ENCODE measurements at regions of chr2 and their contacts with region 1.

Region 1: DNA sequence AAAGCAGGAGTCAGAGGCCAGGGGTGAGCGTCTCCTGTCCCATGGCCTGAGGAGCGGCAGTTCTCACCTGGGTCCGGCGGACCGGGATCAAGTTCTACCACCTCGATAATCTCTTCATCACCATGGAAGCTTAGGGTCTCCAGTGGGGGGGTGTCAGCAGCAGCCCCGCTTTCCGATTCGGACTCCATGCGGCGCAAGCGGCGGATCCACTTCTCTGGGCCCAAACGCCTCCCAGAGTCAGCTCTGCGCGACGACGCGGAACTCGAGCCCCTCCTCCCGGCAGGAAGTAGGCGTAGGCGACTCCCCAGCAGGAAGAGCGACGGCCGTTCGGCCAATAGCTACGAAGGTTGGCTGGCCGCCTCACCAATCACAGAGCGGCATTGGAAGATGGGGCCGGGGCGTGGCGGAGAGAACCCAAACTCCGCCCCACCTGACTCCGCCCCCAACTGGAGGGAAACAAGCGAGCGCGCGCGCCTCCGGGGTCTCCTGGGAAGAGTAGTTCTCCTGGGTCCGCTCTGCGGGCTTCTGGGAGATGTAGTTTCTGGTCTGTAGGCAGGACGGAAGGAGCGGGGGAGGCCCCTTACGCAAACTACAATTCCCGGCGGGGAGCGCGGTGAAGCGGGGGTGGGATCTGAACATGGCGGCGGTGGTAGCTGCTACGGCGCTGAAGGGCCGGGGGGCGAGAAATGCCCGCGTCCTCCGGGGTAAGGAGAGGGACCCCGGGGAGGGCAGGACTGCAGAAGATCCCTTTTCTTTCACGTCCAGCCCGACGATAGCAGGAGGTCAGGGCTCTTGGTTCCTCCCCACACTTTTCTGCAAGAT is at the starts of genes AAMP and PNKD:
- DNase-seq: peak; percentile 100
- H3K4me3 Mint-ChIP-seq: peak within 1 kb of the TSS; percentile 88
- H3K27ac Mint-ChIP-seq: peak within 1 kb of the TSS; percentile 92
- H3K4me1 Mint-ChIP-seq: peaks cover 47% of the 10 kb centered on the region
- H3K27me3 Mint-ChIP-seq: no peaks in the 10 kb centered on the region
- total RNA-seq, gene AAMP: 42.3 to 51.1 TPM
- total RNA-seq, gene PNKD: 34.0 to 39.1 TPM

Region 2: DNA sequence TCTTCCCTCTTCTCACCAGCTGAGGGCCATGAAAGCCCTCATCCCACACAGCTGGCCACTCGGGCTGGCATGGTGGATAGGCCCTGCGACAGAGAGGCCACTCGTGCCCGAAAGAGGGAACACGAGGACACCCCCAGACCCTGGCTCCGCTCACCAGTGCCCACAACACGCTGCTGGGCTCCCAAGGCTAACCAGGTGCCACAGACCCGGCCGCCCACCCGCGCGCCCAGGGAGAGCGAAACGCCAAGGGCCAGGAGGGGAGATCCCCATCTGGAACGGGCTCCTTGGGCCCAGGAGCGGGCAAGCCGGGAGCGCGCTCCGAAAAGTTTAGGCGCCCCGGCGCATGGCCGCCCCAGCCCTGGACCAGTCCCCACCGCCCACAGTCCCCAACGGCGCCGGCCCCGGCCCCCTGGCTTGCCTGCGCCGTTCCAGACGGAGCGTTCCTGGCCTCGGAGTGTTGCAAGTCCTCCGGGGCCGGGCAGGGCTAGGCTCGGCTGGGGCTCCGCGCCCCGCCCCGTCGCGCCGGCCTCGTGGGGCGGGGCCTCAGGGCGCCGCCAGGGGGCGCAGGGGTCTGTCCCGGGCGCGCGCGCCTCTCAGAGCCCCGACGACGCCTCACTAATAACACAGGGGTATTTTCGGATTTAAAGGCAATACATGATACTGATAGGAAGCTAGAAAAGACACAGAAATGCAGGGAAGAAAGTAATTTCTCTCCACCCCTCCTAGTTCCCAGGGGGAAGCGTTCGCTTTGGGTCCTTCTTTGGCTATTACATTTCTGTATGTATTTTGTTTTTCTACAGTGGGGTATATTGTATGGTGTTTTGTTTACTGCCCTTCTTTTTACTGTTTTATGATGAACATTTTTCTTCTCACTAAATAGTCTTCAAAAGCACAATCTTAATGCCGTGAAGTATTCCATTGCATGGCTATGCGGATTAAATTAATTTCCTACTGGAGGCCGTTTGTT is 22.2 kb after region 1 on chr2 and contains the start of gene TMBIM1:
- CTCF ChIA-PET with region 1: interaction called, 113 read pairs
- POLR2A ChIA-PET with region 1: no interaction called
- DNase-seq: peak; percentile 78
- H3K4me3 Mint-ChIP-seq: peak within 1 kb of the TSS; percentile 92
- H3K27ac Mint-ChIP-seq: peak within 1 kb of the TSS; percentile 88
- H3K4me1 Mint-ChIP-seq: peaks cover 60% of the 10 kb centered on the region
- H3K27me3 Mint-ChIP-seq: no peaks in the 10 kb centered on the region
- total RNA-seq, gene TMBIM1: 99.3 to 101 TPM